GM12878 (cell line): ENCODE measurements at regions of chr14 and their contacts with region 1.

Region 1: GRCh38 chr14:75307700-75308379 is 29.2 kb downstream of the FOS start:
- DNase-seq: no peak
- ATAC-seq: peak; percentile 87
- H3K4me3 ChIP-seq: no peak overlapping the region
- H3K27ac ChIP-seq: no peak overlapping the region
- H3K4me1 ChIP-seq: peaks cover 8% of the 10 kb centered on the region
- H3K27me3 ChIP-seq: no peaks in the 10 kb centered on the region
- CTCF ChIP-seq: peak; percentile 87 to 97 (median 88); a peak in 5 of 6 replicates
- EP300 ChIP-seq: no peak
- POLR2A ChIP-seq: no peak
- RAD21 ChIP-seq: peak; percentile 90

Region 2: DNA sequence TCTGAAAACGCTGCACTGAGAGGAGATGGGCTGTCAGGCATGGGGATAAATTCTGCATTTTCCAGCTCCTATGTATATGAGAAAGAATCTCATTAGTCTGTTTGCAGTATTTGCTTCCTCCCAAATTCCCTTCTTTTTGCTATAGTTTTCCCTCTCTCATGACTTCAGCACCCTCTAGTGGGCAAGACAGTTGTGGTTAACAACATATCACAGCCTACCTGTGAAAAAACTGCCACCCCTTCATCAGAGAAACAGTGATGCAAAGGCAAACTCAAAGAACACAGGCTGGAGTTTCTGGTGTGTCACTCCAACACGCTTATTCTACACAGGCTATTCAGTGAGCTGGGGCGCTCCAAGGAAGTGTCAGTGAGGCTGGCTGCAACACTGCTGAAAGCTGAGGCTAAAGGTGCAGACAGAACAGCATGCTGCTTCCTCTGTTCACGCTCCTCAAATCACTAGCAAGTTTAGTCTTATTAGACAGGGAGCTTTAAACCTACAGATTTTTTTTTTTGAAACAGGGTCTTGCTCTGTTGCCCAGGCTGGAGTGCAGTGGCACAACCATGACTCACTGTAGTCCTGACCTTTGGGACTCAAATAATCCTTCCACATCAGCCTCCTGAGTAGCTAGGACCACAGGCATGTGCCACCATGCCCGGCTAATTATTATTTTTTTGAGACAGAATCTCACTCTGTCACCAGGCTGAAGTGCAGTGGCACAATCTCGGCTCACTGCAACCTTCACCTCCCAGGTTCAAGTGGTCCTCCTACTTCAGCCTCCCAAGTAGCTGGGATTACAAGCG is 219.1 kb before region 1 on chr14:
- CTCF ChIA-PET with region 1: interaction called, 4 read pairs
- POLR2A ChIA-PET with region 1: no interaction called
- RAD21 ChIA-PET with region 1: interaction called, 3 read pairs
- SMC1A ChIA-PET with region 1: interaction called, 14 read pairs
- in situ Hi-C with region 1: no loop called
- intact Hi-C with region 1: no loop called
- DNase-seq: no peak
- ATAC-seq: peak; percentile 82
- H3K4me3 ChIP-seq: no peak overlapping the region
- H3K27ac ChIP-seq: no peak overlapping the region
- H3K4me1 ChIP-seq: no peaks in the 10 kb centered on the region
- H3K27me3 ChIP-seq: no peaks in the 10 kb centered on the region
- CTCF ChIP-seq: peak; percentile 64 to 83 (median 68)
- EP300 ChIP-seq: no peak
- POLR2A ChIP-seq: no peak
- RAD21 ChIP-seq: peak; percentile 91

Region 3: DNA sequence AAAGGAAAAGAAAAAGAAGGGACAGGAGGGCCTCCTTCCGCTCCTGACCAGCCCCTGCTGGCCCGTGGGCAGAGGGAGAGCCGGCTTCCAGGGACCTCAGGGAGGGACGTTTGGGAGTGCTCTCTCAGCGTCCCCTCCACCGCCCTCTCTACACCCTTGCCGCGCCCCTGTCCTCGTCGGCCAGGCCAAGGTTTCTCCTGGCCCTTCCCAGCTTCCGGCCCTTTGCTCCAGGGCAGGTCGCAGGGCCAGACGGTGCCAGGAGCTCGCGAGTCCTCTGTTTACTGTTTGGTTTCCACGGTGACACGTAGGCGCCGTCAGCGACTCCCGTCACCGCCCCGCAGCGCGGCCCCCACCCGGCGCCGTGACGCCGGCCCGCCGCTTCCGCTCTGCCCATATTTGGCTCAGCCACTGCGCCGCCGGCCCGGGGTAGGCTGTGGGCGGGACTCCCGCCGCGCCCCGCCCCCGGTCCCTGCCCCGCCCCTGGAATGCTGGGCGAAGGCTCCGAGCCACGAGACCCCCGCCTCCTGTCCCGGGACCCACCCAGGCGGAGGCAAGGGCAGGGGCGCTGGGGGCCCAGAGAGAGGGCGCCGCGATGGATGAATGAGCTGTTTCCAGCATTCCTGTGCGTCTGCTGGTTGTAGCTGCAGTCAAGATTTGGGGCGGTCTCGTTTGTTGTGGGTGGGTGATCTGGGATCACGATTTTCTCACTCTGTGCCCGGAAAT is 13.8 kb before region 1 on chr14:
- CTCF ChIA-PET with region 1: interaction called, 15 read pairs
- POLR2A ChIA-PET with region 1: no interaction called
- RAD21 ChIA-PET with region 1: interaction called, 6 read pairs
- SMC1A ChIA-PET with region 1: interaction called, 4 read pairs
- in situ Hi-C with region 1: no loop called
- intact Hi-C with region 1: no loop called
- DNase-seq: no peak
- ATAC-seq: peak; percentile 99
- H3K4me3 ChIP-seq: peak overlapping the region; percentile 72
- H3K27ac ChIP-seq: no peak overlapping the region
- H3K4me1 ChIP-seq: peaks cover 17% of the 10 kb centered on the region
- H3K27me3 ChIP-seq: no peaks in the 10 kb centered on the region; a peak in 1 of 4 replicates
- CTCF ChIP-seq: no peak
- EP300 ChIP-seq: peak in 1 of 2 experiments; percentile 72; a peak in 2 of 4 replicates
- POLR2A ChIP-seq: no peak
- RAD21 ChIP-seq: no peak

Region 4: GRCh38 chr14:75433631-75434071 is 125.8 kb after region 1 on chr14:
- CTCF ChIA-PET with region 1: interaction called, 10 read pairs
- POLR2A ChIA-PET with region 1: no interaction called
- RAD21 ChIA-PET with region 1: interaction called, 3 read pairs
- SMC1A ChIA-PET with region 1: interaction called, 7 read pairs
- in situ Hi-C with region 1: no loop called
- intact Hi-C with region 1: no loop called
- DNase-seq: no peak
- ATAC-seq: no peak
- H3K4me3 ChIP-seq: no peak overlapping the region
- H3K27ac ChIP-seq: no peak overlapping the region
- H3K4me1 ChIP-seq: peaks cover 44% of the 10 kb centered on the region
- H3K27me3 ChIP-seq: no peaks in the 10 kb centered on the region
- CTCF ChIP-seq: no peak
- EP300 ChIP-seq: no peak
- POLR2A ChIP-seq: no peak
- RAD21 ChIP-seq: no peak

Region 5: GRCh38 chr14:75514673-75515628 is 207.1 kb after region 1 on chr14:
- CTCF ChIA-PET with region 1: interaction called, 12 read pairs
- POLR2A ChIA-PET with region 1: no interaction called
- RAD21 ChIA-PET with region 1: interaction called, 12 read pairs
- SMC1A ChIA-PET with region 1: interaction called, 7 read pairs
- in situ Hi-C with region 1: no loop called
- intact Hi-C with region 1: no loop called
- DNase-seq: peak; percentile 80
- ATAC-seq: peak; percentile 76
- H3K4me3 ChIP-seq: peak overlapping the region; percentile 73
- H3K27ac ChIP-seq: peak overlapping the region; percentile 97
- H3K4me1 ChIP-seq: peaks cover 54% of the 10 kb centered on the region
- H3K27me3 ChIP-seq: no peaks in the 10 kb centered on the region
- CTCF ChIP-seq: no peak
- EP300 ChIP-seq: peak in 1 of 2 experiments; percentile 73; a peak in 3 of 4 replicates
- POLR2A ChIP-seq: 0 out of 2 replicates have a peak, but pooled peaks have one; percentile 36
- RAD21 ChIP-seq: no peak

Region 6: GRCh38 chr14:75654127-75654732 is 346.4 kb after region 1 on chr14:
- CTCF ChIA-PET with region 1: interaction called, 30 read pairs
- POLR2A ChIA-PET with region 1: no interaction called
- RAD21 ChIA-PET with region 1: interaction called, 9 read pairs
- SMC1A ChIA-PET with region 1: interaction called, 13 read pairs
- in situ Hi-C with region 1: no loop called
- intact Hi-C with region 1: loop called (anchors 2 kb)
- DNase-seq: peak; percentile 38
- ATAC-seq: peak; percentile 98
- H3K4me3 ChIP-seq: no peak overlapping the region
- H3K27ac ChIP-seq: no peak overlapping the region
- H3K4me1 ChIP-seq: no peaks in the 10 kb centered on the region
- H3K27me3 ChIP-seq: no peaks in the 10 kb centered on the region
- CTCF ChIP-seq: peak; percentile 97 to 98 (median 97)
- EP300 ChIP-seq: no peak
- POLR2A ChIP-seq: no peak
- RAD21 ChIP-seq: peak; percentile 97